ENCODE measurements at regions of chr11 and their contacts with region 1.

Region 1: GRCh38 chr11:117098269-117099232 is at the start of gene SIK3:
- DNase-seq: peak; percentile 93
- ATAC-seq: peak; percentile 70
- H3K4me3 Mint-ChIP-seq: peak within 1 kb of the TSS; percentile 86
- H3K27ac Mint-ChIP-seq: peak within 1 kb of the TSS; percentile 90
- H3K4me1 Mint-ChIP-seq: peaks cover 43% of the 10 kb centered on the region
- H3K27me3 Mint-ChIP-seq: no peaks in the 10 kb centered on the region
- total RNA-seq, gene SIK3: 31.0 to 38.3 TPM

Region 2: DNA sequence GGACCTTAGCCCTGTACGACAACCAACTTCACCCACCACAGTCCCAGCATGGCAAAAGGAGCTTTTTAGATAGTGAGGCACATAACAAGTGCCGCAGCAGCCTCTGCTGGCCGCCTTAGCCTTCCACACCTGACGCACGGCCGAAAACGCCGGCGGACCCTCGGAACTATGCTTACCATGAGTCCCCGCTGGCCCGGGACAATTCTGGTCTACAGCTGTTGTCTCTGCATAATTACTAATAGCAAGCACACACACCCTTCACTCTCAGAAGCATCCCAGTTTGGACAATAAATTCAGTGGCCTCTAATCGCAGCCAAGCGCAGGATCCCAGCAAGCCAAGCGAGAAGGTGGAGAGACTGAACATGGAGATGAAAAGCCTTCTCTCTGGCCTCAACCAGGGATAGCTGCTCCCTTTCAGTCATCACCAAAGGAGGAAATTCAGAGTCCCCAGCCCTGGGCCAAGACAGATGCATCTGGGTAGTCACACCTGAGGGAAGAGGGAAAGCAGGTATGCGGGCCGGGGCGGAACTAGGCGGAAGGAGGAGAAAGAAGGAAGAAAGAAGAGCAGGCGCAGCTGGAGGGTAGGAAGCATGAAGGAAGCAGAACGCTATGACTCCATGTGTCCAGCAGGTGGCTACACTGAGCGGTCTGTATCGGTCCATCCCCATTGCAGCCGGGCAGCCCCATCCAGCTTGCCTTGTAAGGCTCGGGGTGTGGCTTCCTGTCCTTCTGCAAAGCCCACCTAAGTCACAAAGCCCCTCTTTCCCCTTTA is 366.1 kb before region 1 on chr11:
- CTCF ChIA-PET with region 1: interaction called, 36 read pairs
- DNase-seq: peak; percentile 75
- ATAC-seq: peak; percentile 89
- H3K4me3 Mint-ChIP-seq: no peak overlapping the region
- H3K27ac Mint-ChIP-seq: no peak overlapping the region
- H3K4me1 Mint-ChIP-seq: peaks cover 12% of the 10 kb centered on the region
- H3K27me3 Mint-ChIP-seq: no peaks in the 10 kb centered on the region

Region 3: GRCh38 chr11:117134431-117134830 is 35.9 kb after region 1 on chr11:
- CTCF ChIA-PET with region 1: no interaction called
- DNase-seq: no peak
- ATAC-seq: no peak
- H3K4me3 Mint-ChIP-seq: no peak overlapping the region
- H3K27ac Mint-ChIP-seq: no peak overlapping the region
- H3K4me1 Mint-ChIP-seq: peaks cover 7% of the 10 kb centered on the region
- H3K27me3 Mint-ChIP-seq: peaks cover 3% of the 10 kb centered on the region

Measured in activated CD8-positive, alpha-beta memory T cell treated with anti-CD3 and anti-CD28 coated beads, Interleukin-2, amount 10 ng/mL, durations not matched to agents 7 days and 5 days (primary cell).